ENCODE measurements at regions of chr1 and their contacts with region 1.

Region 1: DNA sequence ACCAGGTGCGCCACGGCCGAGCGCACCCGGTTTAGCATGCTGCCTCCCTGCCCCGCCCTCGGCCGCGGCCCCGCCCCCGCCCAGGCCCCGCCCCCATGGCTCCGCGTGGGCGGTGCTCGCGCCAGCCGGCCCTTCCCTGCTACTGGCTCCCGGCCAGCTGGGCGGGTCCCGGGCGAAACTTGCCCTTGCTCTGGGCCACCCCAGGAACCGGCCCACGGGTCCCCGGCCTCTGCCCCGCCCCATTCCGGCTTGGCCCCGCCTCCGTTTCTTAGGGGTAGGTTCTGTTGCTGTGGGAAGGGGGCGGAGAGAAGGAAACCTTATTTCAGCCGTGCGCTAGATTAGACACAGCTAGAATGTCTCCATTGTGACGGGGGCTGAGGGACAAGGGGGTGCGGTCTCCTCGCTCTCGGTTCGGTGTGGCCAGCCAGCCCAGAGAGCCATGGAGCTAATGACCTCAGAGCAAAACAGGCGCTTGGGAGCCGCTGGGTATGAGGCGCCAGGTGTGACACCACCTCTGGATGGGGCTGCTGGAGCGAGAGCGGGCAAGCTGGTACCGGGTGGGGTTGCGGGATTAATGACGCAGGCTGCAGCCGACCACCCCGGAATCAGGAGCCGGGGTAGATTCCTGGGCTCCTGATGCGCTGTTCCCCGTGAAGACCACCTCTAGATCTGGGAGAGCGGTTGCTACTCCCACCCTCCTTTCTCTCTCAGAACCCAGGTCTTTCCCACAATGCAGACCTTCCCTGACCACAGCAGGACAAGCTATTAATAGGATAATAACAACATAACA is at the start of gene PPM1J:
- DNase-seq: peak; percentile 99 to 100
- H3K4me3 ChIP-seq: peak within 1 kb of the TSS; percentile 60 to 91 (median 63)
- H3K27ac ChIP-seq: peak within 1 kb of the TSS; percentile 47 to 64 (median 49)
- H3K4me1 ChIP-seq: peaks cover 21 to 25% of the 10 kb centered on the region in 2 donors
- H3K27me3 ChIP-seq: no peaks in the 10 kb centered on the region
- CTCF ChIP-seq: no peak
- POLR2A ChIP-seq: peak in 1 of 2 donors; percentile 73
- total RNA-seq, gene PPM1J: 1.7 to 4.8 (median 3.0) TPM

Region 2: GRCh38 chr1:112619520-112620376 is 95.7 kb before region 1 on chr1 and contains the start of gene CAPZA1:
- intact Hi-C with region 1: loop called (anchors 5 kb)
- DNase-seq: peak; percentile 88 to 91
- H3K4me3 ChIP-seq: peak within 1 kb of the TSS; percentile 77 to 97 (median 87)
- H3K27ac ChIP-seq: peak within 1 kb of the TSS; percentile 92 to 99 (median 98)
- H3K4me1 ChIP-seq: peaks cover 17 to 27% of the 10 kb centered on the region in 2 donors
- H3K27me3 ChIP-seq: no peaks in the 10 kb centered on the region
- CTCF ChIP-seq: no peak
- POLR2A ChIP-seq: peak in 1 of 2 donors; percentile 86
- total RNA-seq, gene CAPZA1: 106 to 162 (median 130) TPM

Region 3: DNA sequence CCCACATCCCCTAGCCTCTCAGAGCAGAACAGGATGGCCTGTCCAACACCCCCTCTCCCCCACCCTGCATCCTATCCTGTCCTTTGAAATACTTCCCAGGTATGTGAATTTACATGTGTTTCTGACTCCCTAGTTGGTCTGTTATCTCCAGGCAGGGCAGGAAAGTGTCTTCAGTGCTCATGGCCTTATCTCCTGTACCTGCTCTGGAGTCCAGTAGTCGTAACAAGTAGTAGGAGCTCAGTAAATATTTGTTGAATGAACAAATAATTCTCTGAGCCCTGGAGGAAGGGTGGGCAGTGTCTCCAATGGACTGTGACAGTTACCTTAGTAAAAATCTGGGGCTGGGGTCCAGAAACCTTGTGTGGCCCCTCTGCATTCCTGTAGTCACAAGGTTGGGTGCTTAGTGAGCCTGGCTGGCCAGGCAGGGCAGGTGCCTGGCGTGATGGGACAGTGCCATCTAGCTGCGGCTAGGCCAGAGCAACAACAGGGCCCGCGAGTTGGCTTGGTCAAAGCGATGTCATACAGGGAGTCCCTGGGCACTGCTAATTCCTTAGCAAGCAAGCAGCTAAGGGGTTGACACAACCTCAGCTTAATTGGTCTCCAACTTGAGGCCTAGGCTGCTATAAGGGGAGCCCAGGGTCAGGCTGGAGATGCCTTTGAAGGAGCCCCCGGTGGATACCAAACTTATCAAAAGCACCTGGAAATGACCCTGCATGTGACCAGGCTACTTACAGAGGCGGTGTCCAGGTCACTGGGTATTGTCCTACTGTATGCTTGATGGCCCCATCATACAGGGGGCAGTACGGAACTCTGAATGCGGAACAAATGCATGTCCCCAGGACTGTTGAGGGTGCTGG is 88.7 kb after region 1 on chr1:
- intact Hi-C with region 1: loop called (anchors 2 kb)
- DNase-seq: peak; percentile 82 to 84
- H3K4me3 ChIP-seq: no peak overlapping the region
- H3K27ac ChIP-seq: no peak overlapping the region
- H3K4me1 ChIP-seq: no peaks in the 10 kb centered on the region
- H3K27me3 ChIP-seq: no peaks in the 10 kb centered on the region
- CTCF ChIP-seq: peak; percentile 32 to 96 (median 84)
- POLR2A ChIP-seq: no peak